AG04449 (cell line): ENCODE measurements at regions of chr10 and their contacts with region 1.

Region 1: GRCh38 chr10:99926925-99927720 is 82.6 kb downstream of the DNMBP start:
- DNase-seq: no peak
- H3K4me3 ChIP-seq: no peak overlapping the region
- CTCF ChIP-seq: no peak

Region 2: GRCh38 chr10:99945263-99945662 is 18.1 kb after region 1 on chr10:
- CTCF ChIA-PET with region 1: interaction called, 14 read pairs
- POLR2A ChIA-PET with region 1: no interaction called
- DNase-seq: peak; percentile 54
- H3K4me3 ChIP-seq: no peak overlapping the region
- CTCF ChIP-seq: no peak